Activated T-helper 1 cell treated with anti-CD3 and anti-CD28 coated beads, Interleukin-12 subunit alpha, Interleukin-12 subunit beta, Interleukin-2, Interleukin-4 antibody, amounts not matched to agents 30 ng/mL and 10 ng/mL and 1 ng/mL, durations not matched to agents 14 hours and 24 hours and 36 hours (primary cell): ENCODE measurements at regions of chr9 and their contacts with region 1.

Region 1: GRCh38 chr9:109463924-109464625 is 34.0 kb downstream of the PTPN3 start:
- DNase-seq: peak; percentile 29
- H3K4me3 Mint-ChIP-seq: no peak overlapping the region
- H3K27ac Mint-ChIP-seq: peak overlapping the region; percentile 88
- H3K4me1 Mint-ChIP-seq: peaks cover 71% of the 10 kb centered on the region
- H3K27me3 Mint-ChIP-seq: peaks cover 1% of the 10 kb centered on the region

Region 2: GRCh38 chr9:109381011-109381729 is 82.9 kb before region 1 on chr9:
- intact Hi-C with region 1: no loop called
- DNase-seq: no peak
- H3K4me3 Mint-ChIP-seq: no peak overlapping the region
- H3K27ac Mint-ChIP-seq: no peak overlapping the region
- H3K4me1 Mint-ChIP-seq: no peaks in the 10 kb centered on the region
- H3K27me3 Mint-ChIP-seq: peaks cover 3% of the 10 kb centered on the region

Region 3: DNA sequence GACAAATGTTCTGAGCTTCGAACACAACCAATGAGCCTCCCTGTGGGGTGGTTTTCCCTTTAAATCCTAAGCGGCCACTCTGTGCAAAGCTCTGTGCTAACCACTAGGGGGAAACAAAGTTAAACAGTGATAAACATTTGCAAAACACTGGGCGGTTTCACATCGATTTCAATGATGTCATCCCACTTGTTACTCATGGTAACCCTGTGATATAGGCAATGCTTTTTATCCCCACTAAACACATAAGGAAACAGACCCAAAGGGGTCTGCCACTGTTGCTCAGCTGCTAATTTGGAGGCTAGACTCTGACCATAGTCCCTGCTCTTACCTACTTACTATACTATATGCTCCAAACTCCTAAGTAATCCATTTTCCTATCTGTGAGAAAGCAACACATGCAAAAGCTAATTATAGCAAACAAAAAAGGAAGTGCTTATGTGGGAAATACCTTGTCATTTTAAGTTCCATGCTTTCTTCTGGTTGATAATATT is 23.2 kb before region 1 on chr9:
- intact Hi-C with region 1: loop called (anchors 1 kb)
- DNase-seq: peak; percentile 71
- H3K4me3 Mint-ChIP-seq: no peak overlapping the region
- H3K27ac Mint-ChIP-seq: peak overlapping the region; percentile 85
- H3K4me1 Mint-ChIP-seq: peaks cover 34% of the 10 kb centered on the region
- H3K27me3 Mint-ChIP-seq: peaks cover 9% of the 10 kb centered on the region

Region 4: GRCh38 chr9:109447329-109448076 is 16.6 kb before region 1 on chr9:
- intact Hi-C with region 1: loop called (anchors 1 kb)
- DNase-seq: peak; percentile 31
- H3K4me3 Mint-ChIP-seq: peak overlapping the region; percentile 28
- H3K27ac Mint-ChIP-seq: peak overlapping the region; percentile 89
- H3K4me1 Mint-ChIP-seq: peaks cover 40% of the 10 kb centered on the region
- H3K27me3 Mint-ChIP-seq: peaks cover 3% of the 10 kb centered on the region

Region 5: GRCh38 chr9:109478665-109479380 is 14.7 kb after region 1 on chr9:
- intact Hi-C with region 1: loop called (anchors 1 kb)
- DNase-seq: no peak
- H3K4me3 Mint-ChIP-seq: no peak overlapping the region
- H3K27ac Mint-ChIP-seq: peak overlapping the region; percentile 90
- H3K4me1 Mint-ChIP-seq: peaks cover 49% of the 10 kb centered on the region
- H3K27me3 Mint-ChIP-seq: peaks cover 11% of the 10 kb centered on the region